Activated CD4-positive, alpha-beta memory T cell treated with anti-CD3 and anti-CD28 coated beads for 36 hours (primary cell): ENCODE measurements at regions of chr19 and their contacts with region 1.

Region 1: DNA sequence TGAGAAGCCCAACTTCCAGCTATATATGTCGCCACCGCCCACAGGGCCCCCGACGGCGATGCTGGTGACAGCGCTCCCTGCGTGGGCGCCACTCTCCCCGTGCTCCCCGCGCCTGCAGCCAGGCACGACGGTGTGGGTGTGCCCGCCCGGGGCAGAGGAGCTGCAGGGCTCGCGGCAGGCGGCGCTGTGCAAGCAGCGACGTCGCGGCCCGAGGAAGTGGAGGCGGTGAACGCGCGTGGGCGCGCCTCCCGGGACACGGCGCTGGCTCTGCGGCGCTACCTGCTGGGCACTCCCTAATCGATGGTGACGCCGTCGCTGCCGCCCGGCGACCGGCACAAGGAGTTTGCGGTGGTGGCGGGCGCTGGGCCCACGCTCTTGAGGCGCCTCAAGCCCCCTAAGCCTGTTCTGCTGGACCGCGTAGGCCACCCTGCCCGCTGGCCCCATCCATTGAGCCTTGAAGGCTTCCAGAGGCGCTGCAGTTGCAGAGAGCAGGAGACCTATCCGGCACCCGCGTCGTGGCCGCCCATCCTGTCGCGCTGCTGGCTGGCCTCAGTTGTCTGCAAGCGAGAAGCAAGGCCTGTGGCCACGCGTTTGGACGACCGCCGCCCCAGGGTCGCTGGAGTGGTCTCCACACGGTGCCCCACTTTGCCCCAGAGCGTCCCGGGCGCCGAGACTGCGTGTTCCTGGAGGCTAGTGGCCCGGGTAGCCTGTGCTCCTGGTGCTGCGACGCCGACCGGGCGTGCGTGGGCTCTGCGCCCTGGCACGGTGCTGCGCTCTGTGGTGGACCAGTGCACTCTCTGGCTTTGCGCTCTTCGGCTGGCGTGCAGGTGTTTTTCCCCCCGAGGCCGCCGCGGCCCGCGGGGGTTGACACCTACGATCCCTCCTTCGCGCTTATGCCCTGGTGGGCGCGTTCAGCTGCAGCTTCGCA is 23.1 kb downstream of the LRFN3 start:
- DNase-seq: peak; percentile 85
- H3K4me3 Mint-ChIP-seq: peak overlapping the region; percentile 49
- H3K27ac Mint-ChIP-seq: no peak overlapping the region
- H3K4me1 Mint-ChIP-seq: peaks cover 29% of the 10 kb centered on the region
- H3K27me3 Mint-ChIP-seq: peaks cover 3% of the 10 kb centered on the region

Region 2: DNA sequence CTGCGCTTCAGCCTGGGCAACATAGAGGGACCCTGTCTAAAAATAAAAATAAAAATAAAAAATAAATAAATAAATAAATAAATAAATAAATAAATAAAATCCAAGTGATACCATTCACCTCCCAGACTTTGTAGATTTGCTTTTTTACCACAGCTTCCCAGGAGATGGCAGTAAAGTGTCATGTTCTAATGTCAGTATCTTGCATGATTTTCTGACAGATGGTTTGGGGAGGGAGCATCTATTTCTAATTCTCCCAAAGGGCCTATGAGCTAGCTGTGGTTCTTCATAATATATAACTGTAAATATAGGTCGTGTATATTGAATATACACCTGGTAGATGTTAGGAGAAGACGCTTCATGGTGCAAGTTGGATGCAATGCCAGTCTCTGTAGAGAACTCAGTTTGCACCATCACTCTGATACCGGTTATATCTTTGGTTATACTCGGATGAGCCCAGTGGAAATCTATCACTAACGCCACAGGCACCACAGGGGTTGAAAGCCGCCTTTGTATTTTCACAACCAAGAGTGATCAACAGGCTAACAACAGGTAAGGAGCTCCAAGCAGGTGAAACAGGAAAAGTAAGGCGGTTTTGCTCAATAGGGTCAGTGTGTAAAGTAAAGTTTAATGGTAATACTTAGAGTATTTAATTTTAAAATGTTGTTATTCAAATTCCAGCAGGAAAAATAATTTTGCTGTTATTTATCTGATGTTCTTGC is 77.0 kb before region 1 on chr19:
- CTCF ChIA-PET with region 1: no interaction called
- POLR2A ChIA-PET with region 1: no interaction called
- intact Hi-C with region 1: no loop called
- DNase-seq: no peak
- H3K4me3 Mint-ChIP-seq: no peak overlapping the region
- H3K27ac Mint-ChIP-seq: no peak overlapping the region
- H3K4me1 Mint-ChIP-seq: peaks cover 6% of the 10 kb centered on the region
- H3K27me3 Mint-ChIP-seq: peaks cover 14% of the 10 kb centered on the region

Region 3: DNA sequence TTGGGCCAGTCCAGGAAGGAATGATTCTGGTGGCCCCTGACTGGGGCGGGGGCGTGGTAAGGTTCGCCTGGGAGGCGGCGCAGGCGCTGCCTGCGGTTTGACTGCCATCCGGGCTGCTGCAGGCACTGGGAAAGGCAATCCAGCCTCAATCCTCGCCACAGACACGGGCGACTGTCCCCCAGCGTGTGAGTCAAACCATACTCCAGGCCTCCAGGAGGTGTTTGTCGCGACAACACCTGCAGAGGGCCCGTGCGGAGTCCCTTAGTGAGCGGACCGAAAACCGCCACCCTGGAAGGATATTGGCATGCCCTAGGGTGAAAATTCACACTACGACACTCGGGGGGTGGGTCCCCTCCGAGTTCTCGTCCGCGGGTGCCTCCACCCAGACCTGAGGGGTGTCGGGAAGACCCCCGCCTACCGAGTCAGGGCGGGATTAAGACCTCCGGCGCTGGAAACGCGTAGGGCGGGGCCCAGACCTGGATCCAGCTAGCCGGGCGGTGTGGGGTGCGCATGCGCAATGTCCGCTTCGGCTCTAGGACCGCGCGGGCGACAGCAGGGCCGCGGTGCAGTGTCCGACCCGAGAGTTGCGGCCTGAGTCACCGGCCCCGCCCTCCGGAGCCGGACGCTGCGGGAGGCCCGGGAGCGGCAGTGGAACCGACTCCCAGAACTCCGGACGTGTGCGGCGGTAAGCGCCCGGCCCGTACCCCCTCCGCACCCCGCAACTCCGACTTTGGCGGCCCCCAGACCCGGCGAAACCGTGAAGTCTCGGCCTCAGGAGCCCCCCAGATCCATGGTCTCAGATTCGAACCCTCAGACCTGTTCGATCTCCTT is 180.4 kb after region 1 on chr19 and contains the start of gene CAPNS1:
- CTCF ChIA-PET with region 1: no interaction called
- POLR2A ChIA-PET with region 1: no interaction called
- intact Hi-C with region 1: loop called (anchors 10 kb)
- DNase-seq: peak; percentile 96
- H3K4me3 Mint-ChIP-seq: peak within 1 kb of the TSS; percentile 92
- H3K27ac Mint-ChIP-seq: peak within 1 kb of the TSS; percentile 97
- H3K4me1 Mint-ChIP-seq: peaks cover 26% of the 10 kb centered on the region
- H3K27me3 Mint-ChIP-seq: no peaks in the 10 kb centered on the region
- total RNA-seq, gene CAPNS1: 430 to 447 TPM